ENCODE measurements at regions of chr1 and their contacts with region 1.

Region 1: DNA sequence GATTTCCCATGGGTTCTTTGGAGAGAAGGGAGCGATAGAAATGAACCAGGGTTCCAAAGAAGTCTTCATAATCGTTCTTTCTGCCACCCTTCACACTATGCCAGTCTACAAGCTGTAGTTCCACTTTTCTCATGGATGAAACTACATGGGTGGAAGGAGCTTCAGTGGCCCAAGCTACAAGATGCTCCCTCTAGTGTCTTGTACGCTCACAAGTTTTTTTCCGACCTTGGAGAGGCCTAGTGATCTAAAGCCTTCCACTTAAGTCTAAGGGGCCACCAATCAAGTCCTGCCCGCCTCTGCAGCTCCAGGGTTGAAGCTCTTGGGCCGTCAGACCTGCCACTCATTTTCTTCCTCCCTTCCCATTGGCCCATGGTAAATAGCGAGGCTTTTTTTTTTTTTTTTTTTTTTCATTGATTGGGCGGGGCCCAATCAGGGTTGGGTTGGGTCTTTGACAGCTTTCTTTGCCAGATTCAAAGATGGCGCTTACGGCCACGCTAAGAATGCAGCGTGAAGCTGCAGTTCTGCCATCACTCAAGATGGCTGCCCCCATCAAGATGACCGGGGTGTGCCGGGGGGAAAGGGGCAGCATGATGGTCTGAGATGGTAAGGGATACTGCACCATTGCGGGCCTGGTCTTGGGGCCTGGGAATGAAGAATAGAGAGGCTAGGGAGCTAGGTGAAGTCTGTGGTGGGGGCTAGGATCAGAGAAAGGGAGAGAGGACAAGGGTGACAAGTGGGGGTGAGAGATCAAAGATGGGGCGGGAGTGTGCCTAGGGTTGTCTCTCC is at the start of gene TOMM40L:
- DNase-seq: peak; percentile 99
- H3K4me3 ChIP-seq: peak within 1 kb of the TSS; percentile 63
- H3K27me3 ChIP-seq: no peaks in the 10 kb centered on the region
- CTCF ChIP-seq: peak; percentile 76
- polyA plus RNA-seq, gene TOMM40L: 9.6 and 13.1 TPM in 2 replicates

Region 2: DNA sequence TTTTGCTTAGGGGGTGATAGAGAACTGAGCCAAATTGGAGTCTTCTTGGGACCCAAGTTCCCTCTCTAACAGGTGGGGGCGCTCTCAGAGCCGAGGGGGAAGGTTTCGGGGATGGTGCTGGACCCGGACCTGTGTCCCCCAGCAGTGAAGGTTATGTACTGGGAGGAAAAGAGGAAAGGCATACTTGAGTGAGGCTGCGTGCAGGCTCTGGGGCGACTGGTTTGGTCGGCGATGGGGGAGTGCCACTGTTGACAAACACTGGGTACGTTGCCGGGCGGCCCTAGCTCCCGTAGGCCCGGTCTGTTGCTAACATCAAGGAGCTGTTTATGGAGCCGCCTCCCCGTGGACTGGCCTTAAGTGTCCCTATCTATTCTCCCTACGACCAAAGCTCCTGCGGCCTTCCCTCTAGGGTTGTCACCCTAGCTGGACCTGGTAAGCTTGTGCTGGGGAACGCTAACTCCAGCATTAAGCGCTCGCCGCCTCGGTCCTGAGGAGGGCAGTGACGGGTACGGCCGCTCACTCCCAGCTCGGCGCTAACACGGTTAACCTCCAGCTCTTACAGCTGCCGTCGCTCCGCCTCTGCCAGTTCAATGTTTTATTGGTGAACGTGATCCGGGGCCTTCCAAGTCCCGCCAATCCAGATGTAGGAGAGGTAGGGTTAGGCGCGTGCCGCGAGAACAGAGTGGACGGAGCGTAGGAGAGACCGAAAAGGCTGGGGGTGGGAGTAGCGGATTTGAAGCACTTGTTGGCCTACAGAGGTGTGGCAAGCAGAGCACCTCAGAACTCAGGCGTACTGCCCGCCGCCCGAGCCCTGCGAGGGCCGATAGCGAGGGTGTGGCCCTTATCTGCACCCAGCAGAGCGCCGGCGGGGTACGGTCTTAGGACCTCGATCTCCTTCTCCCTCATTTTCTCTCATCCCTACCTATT is 59.7 kb before region 1 on chr1 and contains the start of gene PPOX:
- CTCF ChIA-PET with region 1: interaction called, 10 read pairs
- POLR2A ChIA-PET with region 1: no interaction called
- DNase-seq: peak; percentile 95
- H3K4me3 ChIP-seq: peak within 1 kb of the TSS; percentile 81
- H3K27me3 ChIP-seq: no peaks in the 10 kb centered on the region
- CTCF ChIP-seq: peak; percentile 59
- polyA plus RNA-seq, gene PPOX: 17.6 and 29.7 TPM in 2 replicates

Region 3: DNA sequence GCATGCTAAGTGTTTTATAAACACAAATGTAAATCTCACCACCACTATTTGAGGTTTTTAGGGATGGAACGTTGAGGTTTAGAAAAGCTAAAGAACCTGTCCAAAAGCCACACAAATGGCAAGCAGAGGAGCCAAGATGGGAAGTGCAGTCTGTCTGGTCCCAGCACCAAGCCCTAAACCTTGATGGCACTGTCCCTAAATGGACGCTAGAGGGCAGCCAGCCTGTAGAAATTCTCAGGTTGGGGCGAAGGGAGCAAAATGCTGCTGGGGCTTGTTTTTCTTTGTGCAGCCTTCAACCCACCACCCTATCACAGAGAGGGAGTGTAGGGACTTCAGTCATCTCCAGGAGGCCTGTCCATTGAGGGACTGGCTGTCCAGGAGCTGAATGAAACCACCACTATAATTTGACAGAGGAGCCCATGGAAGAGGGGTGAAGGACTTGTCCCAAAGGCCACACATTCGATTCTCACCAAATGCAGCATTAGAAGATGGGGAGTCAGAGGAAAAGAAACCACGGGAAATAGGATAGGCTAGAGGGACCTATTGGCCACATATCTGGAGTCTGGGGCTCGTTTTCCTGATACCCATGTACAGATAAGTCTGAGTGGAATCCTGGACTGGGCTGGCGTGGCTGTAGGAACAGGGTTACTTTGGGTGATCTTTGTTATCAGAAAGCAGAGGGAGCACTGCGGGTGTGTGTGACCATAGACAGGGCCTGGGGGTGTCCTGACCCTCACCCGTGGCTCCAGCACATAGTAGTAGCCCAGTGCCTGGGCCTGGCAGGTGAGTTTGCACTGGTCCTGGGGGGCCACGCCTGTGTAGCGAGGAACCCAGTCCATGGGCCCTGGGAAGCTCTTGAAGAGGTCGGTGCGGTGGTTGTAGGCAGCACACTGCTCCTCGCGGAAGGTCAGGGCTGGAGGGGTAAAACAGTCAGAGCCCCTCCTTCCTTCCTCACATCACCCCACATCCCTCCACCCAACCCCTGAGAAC is 33.0 kb before region 1 on chr1:
- CTCF ChIA-PET with region 1: interaction called, 49 read pairs
- POLR2A ChIA-PET with region 1: no interaction called
- DNase-seq: no peak
- H3K4me3 ChIP-seq: no peak overlapping the region
- H3K27me3 ChIP-seq: no peaks in the 10 kb centered on the region
- CTCF ChIP-seq: peak; percentile 93

Region 4: DNA sequence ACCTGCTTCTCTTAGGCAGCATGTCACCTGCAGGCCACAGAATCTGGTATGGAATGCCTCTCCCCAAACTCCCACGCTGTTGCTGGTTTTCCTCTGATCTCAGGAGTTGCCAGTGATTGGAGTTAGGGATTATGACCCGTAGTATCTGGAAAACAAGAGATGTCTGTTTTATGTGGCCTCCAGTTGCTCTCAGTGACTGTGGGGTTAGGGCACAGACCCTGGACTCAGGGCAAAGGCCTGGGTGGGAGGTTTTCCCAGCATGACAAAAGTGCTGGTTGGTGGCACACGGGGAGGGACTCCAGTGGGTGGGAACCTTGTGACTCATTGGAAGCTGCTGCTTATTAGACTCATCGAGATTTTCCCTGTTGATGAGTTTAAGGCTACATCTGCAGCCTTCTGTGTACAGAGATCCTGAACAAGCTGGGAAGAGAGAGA is 12.3 kb after region 1 on chr1 and contains the start of gene NR1I3:
- CTCF ChIA-PET with region 1: interaction called, 16 read pairs
- POLR2A ChIA-PET with region 1: no interaction called
- DNase-seq: no peak
- H3K4me3 ChIP-seq: no peak within 1 kb of the TSS
- H3K27me3 ChIP-seq: no peaks in the 10 kb centered on the region; the same call in 1 of the 2 replicates
- CTCF ChIP-seq: no peak
- polyA plus RNA-seq, gene NR1I3: not detected in 2 replicates

Region 5: DNA sequence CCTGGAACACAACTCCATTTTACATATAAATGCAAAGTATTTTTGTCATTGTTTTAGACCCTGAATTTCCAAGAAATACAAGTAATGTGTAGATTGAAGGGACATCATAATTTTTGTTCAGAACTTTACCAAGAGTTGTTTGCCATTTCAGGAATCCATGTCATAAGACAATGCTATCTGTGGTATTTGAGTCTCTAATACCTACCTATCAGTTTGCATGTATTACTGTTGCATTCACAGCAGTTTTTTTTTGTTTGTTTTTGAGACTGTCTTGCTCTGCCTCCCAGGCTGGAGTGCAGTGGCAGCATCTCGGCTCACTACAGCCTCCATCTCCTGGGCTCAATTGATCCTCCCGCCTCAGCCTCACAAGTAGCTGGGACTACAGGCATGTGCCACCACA is 66.9 kb after region 1 on chr1:
- CTCF ChIA-PET with region 1: interaction called, 106 read pairs
- POLR2A ChIA-PET with region 1: no interaction called
- DNase-seq: no peak
- H3K4me3 ChIP-seq: no peak overlapping the region
- H3K27me3 ChIP-seq: peaks cover 2% of the 10 kb centered on the region; the same call in 1 of the 2 replicates
- CTCF ChIP-seq: no peak

Region 6: GRCh38 chr1:161351482-161351881 is 125.8 kb after region 1 on chr1:
- CTCF ChIA-PET with region 1: interaction called, 3 read pairs
- POLR2A ChIA-PET with region 1: interaction called, 12 read pairs
- DNase-seq: no peak
- H3K4me3 ChIP-seq: no peak overlapping the region
- H3K27me3 ChIP-seq: no peaks in the 10 kb centered on the region
- CTCF ChIP-seq: no peak

Region 7: DNA sequence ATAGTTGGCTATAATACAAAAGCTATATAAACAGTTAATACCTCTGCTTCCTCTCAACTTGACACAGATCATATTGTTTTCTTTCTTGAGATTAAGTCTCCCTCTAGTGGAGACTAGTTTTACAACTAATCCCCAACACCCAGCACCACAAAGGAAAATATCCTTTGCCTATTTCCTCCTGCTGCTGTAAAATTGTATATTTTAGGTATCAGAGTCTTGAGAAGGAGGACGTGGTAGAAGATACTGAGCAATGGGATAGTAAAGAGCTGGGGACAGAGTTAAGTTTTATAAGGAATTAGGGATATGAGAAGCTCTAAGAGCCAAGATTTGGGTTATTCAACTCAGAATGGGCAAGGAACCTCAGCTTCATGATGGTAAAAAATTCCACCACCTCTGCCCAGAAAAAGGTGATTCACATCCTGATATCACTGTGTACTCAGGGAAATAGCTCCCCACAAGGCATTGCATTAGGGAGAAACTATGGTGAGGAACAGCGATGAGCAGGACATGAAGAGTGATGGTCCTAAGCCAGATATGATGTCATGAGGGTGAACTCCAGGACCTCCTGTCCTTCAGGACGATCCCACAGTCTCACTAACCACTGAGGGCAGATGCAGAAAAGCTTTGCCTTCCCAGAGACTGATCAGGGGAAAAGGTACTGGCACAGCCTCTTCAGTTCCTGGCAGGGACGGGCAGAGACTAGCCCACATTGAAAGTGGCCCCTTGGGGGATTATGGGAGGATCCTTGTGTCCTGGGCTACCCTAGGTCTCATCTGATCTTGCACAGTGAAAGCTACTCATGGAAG is 156.7 kb after region 1 on chr1:
- CTCF ChIA-PET with region 1: interaction called, 126 read pairs
- POLR2A ChIA-PET with region 1: no interaction called
- DNase-seq: peak; percentile 11
- H3K4me3 ChIP-seq: no peak overlapping the region
- H3K27me3 ChIP-seq: no peaks in the 10 kb centered on the region
- CTCF ChIP-seq: peak; percentile 60

Region 8: GRCh38 chr1:161549652-161550051 is 323.9 kb after region 1 on chr1 and contains the start of gene FCGR3A:
- CTCF ChIA-PET with region 1: no interaction called
- POLR2A ChIA-PET with region 1: no interaction called
- DNase-seq: no peak
- H3K4me3 ChIP-seq: no peak within 1 kb of the TSS
- H3K27me3 ChIP-seq: no peaks in the 10 kb centered on the region
- CTCF ChIP-seq: no peak
- polyA plus RNA-seq, gene FCGR3A: not detected in 2 replicates

Measured in BJ (cell line).